T-cell (primary cell): ENCODE measurements at regions of chr16 and their contacts with region 1.

Region 1: GRCh38 chr16:90022209-90023064 is 3.2 kb upstream of the DBNDD1 start:
- DNase-seq: peak; percentile 32 to 81 (median 64)
- ATAC-seq: peak; percentile 83
- H3K4me3 ChIP-seq: peak overlapping the region; percentile 54 to 77
- H3K4me3 Mint-ChIP-seq: peak overlapping the region; percentile 73 to 77 (median 74)
- H3K27ac ChIP-seq: no peak overlapping the region
- H3K27ac Mint-ChIP-seq: peak overlapping the region; percentile 15 to 66
- H3K4me1 ChIP-seq: peaks cover 6 to 43% of the 10 kb centered on the region in 2 experiments
- H3K4me1 Mint-ChIP-seq: peaks cover 15 to 38% (median 27%) of the 10 kb centered on the region in 3 donors
- H3K27me3 ChIP-seq: peaks cover 3 to 29% of the 10 kb centered on the region in 2 experiments
- H3K27me3 Mint-ChIP-seq: peaks cover 0 to 7% of the 10 kb centered on the region in 2 donors

Region 2: DNA sequence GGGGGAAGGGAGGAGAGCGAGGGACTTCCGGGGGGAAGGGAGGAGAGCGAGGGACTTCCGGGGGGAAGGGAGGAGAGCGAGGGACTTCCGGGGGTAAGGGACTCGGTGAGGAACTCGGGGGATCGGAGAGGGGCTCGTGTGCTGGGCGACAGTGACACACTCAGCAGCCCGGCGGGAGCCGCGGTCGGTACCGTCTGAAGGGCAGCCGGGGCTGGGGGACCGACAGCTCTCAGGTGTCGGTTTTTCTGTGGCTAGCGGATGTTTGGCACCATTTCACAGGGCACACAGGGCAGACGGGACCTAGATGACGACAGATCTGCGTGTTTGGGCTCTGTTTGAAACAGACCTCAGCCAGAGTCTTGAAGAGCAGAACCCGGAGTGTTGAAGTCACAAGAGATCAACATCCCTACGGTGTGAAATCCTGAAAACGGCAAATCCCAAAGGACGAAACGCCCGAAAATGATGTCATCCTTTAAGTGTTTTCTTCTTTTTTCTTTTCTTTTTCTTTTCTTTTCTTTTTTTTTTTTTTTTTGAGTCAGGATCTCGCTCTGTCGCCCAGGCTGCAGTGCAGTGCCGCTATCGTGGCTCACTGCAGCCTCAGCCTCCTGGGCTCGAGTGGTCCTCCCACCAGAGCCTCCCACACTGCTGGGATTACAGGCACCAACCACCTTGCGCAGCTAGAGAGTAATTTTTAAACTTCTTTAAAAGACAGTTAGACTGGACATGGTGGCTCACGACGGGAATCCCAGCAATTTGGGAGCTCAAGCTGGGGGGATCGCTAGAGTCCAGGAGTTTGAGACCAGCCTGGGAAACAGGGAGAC is 781.0 kb before region 1 on chr16:
- CTCF ChIA-PET with region 1: no interaction called
- POLR2A ChIA-PET with region 1: no interaction called
- DNase-seq: peak; percentile 64 to 96 (median 89)
- ATAC-seq: peak; percentile 76 to 86 (median 80)
- H3K4me3 ChIP-seq: peak overlapping the region; percentile 63 to 87
- H3K4me3 Mint-ChIP-seq: peak overlapping the region; percentile 82 to 98 (median 97)
- H3K27ac ChIP-seq: peak overlapping the region; percentile 91
- H3K27ac Mint-ChIP-seq: peak overlapping the region; percentile 99
- H3K4me1 ChIP-seq: peaks cover 3 to 23% of the 10 kb centered on the region in 2 experiments
- H3K4me1 Mint-ChIP-seq: peaks cover 11 to 25% (median 21%) of the 10 kb centered on the region in 3 donors
- H3K27me3 ChIP-seq: no peaks in the 10 kb centered on the region
- H3K27me3 Mint-ChIP-seq: no peaks in the 10 kb centered on the region

Region 3: DNA sequence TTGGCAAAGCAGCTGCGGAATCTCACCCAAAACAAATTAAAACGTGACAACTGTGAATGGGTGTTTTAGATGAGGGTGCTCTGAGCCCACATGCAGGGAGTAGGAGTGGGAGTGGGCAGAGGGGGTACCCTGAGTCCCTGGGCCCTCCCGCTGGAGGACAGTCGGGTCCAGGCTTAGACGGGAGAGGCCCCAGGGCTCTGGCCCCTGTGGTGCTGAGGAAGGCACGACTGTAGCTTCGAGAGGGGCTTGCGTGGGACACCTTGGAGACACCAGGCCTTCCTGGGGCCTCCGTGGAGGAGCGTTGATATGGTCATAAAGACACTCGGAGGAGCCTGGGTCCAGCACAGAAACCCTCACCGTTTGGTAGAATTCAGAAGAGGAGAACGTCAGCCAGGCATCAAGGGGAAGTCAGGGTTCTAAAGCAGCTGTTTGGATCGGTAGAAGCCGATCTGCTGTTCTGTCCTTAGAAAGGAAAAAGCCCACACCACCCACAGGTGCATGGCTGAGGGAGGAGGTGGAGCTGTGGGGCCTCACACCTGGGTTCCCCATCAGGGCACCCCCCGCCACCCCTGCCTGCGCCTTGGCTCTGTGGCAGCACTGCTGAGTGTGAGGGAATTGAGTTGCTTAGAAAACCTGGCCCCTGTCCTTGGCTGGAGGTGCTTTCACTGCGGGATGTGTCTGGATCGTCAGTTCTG is 21.6 kb before region 1 on chr16:
- CTCF ChIA-PET with region 1: interaction called in 1 of 2 experiments, 14 read pairs
- POLR2A ChIA-PET with region 1: no interaction called
- DNase-seq: no peak
- ATAC-seq: no peak
- H3K4me3 ChIP-seq: no peak overlapping the region
- H3K4me3 Mint-ChIP-seq: no peak overlapping the region
- H3K27ac ChIP-seq: no peak overlapping the region
- H3K27ac Mint-ChIP-seq: no peak overlapping the region
- H3K4me1 ChIP-seq: no peaks in the 10 kb centered on the region
- H3K4me1 Mint-ChIP-seq: peaks cover 0 to 4% (median 0%) of the 10 kb centered on the region in 3 donors
- H3K27me3 ChIP-seq: no peaks in the 10 kb centered on the region
- H3K27me3 Mint-ChIP-seq: no peaks in the 10 kb centered on the region

Region 4: GRCh38 chr16:90077226-90077756 is 54.9 kb after region 1 on chr16 and contains the start of gene PRDM7:
- CTCF ChIA-PET with region 1: no interaction called
- POLR2A ChIA-PET with region 1: no interaction called
- DNase-seq: peak; percentile 85 to 97 (median 93)
- ATAC-seq: peak; percentile 90 to 94 (median 92)
- H3K4me3 ChIP-seq: peak within 1 kb of the TSS; percentile 65
- H3K4me3 Mint-ChIP-seq: peak within 1 kb of the TSS; percentile 79 to 87 (median 87)
- H3K27ac ChIP-seq: peak within 1 kb of the TSS; percentile 20
- H3K27ac Mint-ChIP-seq: peak within 1 kb of the TSS; percentile 75 to 92
- H3K4me1 ChIP-seq: peaks cover 3 to 24% of the 10 kb centered on the region in 2 experiments
- H3K4me1 Mint-ChIP-seq: peaks cover 24 to 28% (median 26%) of the 10 kb centered on the region in 3 donors
- H3K27me3 ChIP-seq: peaks cover 0 to 25% of the 10 kb centered on the region in 2 experiments
- H3K27me3 Mint-ChIP-seq: peaks cover 0 to 20% of the 10 kb centered on the region in 2 donors
- total RNA-seq, gene PRDM7: not detected